ENCODE measurements at regions of chr9 and their contacts with region 1.

Region 1: DNA sequence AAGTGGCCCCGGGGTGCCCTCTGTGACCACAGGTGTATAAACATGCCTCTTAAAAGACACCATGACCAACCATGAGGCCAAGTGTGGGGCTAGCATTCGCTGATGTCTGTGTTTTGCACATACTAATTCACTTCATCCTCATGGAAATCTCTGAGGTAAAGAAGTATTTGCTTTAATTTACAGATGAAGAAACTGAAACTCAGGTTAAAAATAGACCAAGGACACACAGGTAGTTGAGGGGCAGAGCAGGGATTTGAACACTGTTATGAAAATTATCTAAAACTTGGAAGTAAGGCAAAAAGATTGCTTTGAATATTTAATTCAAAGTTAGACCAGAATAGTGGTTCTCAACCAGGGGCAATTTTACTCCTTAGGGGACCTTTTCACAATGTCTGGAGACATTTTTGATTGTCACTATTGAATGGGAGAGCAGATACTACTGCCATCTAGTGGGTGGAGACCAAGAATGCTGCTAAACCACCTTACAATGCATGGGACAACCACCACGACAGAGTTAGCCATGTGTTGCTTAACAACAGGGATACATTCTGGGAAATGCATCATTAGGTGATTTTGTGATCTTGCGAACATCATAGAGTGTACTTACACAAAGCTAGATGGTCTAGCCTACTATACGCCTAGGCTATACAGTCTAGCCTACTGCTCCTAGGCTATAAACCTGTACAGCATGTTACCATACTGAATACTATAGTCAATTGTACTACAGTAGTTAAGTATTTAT is 8.0 kb upstream of the FXN start:
- DNase-seq: peak; percentile 30
- H3K4me3 Mint-ChIP-seq: no peak overlapping the region
- H3K27ac Mint-ChIP-seq: no peak overlapping the region
- H3K4me1 Mint-ChIP-seq: peaks cover 54% of the 10 kb centered on the region
- H3K27me3 Mint-ChIP-seq: no peaks in the 10 kb centered on the region

Region 2: GRCh38 chr9:68704814-68705530 is 322.6 kb before region 1 on chr9 and contains the start of gene PIP5K1B:
- intact Hi-C with region 1: loop called (anchors 10 kb)
- DNase-seq: peak; percentile 69
- H3K4me3 Mint-ChIP-seq: peak within 1 kb of the TSS; percentile 88
- H3K27ac Mint-ChIP-seq: peak within 1 kb of the TSS; percentile 67
- H3K4me1 Mint-ChIP-seq: peaks cover 54% of the 10 kb centered on the region
- H3K27me3 Mint-ChIP-seq: peaks cover 36% of the 10 kb centered on the region
- total RNA-seq, gene PIP5K1B: 76.2 and 77.2 TPM in 2 replicates

Region 3: GRCh38 chr9:68793605-68794343 is 233.8 kb before region 1 on chr9:
- intact Hi-C with region 1: loop called (anchors 5 kb)
- DNase-seq: peak; percentile 33
- H3K4me3 Mint-ChIP-seq: no peak overlapping the region
- H3K27ac Mint-ChIP-seq: no peak overlapping the region
- H3K4me1 Mint-ChIP-seq: peaks cover 25% of the 10 kb centered on the region
- H3K27me3 Mint-ChIP-seq: no peaks in the 10 kb centered on the region

Region 4: GRCh38 chr9:68804911-68805889 is 222.3 kb before region 1 on chr9:
- intact Hi-C with region 1: no loop called
- DNase-seq: no peak
- H3K4me3 Mint-ChIP-seq: no peak overlapping the region
- H3K27ac Mint-ChIP-seq: no peak overlapping the region
- H3K4me1 Mint-ChIP-seq: peaks cover 4% of the 10 kb centered on the region
- H3K27me3 Mint-ChIP-seq: no peaks in the 10 kb centered on the region

Region 5: DNA sequence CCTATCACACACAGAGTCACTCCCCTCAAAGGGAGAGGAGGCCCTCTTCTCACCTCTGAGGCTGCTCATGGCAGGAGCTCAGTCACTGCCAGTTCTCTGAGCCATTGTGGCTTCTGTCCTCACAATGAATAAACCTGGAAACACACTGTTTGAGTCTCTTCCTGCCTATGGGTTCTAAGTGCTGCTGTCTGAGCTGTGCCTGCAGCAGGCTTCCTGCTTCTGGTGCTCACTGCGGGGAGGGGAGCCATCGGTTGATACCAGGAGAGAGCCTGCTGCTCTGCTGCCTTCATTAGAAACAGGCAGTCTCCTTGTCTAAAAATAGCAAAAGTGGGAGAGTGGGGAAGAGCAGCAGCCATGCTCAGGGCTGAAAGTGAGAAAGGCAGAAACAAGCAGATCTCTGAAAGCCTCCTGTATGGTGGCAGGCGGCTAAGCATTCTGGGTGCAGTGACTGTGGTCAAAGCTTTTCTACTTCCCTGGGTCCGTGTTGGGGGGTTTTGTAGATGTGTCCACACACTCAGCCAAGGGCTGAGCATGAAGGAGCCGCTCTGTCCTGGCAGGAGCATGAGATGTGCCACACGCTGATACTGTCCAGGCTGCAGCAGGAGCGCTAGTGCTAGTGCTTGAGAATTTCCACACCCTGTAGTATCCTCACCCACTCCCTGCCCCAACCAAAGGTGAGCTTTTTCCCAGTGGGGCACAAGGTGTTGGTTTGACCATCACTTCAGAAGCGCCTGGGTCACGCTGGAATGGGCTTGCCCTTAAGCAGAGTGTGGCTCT is 47.8 kb before region 1 on chr9:
- intact Hi-C with region 1: loop called (anchors 5 kb)
- DNase-seq: peak; percentile 41
- H3K4me3 Mint-ChIP-seq: peak overlapping the region; percentile 55
- H3K27ac Mint-ChIP-seq: peak overlapping the region; percentile 90
- H3K4me1 Mint-ChIP-seq: peaks cover 76% of the 10 kb centered on the region
- H3K27me3 Mint-ChIP-seq: no peaks in the 10 kb centered on the region

Region 6: GRCh38 chr9:69078581-69078980 is 51.1 kb after region 1 on chr9:
- intact Hi-C with region 1: no loop called
- DNase-seq: no peak
- H3K4me3 Mint-ChIP-seq: no peak overlapping the region
- H3K27ac Mint-ChIP-seq: no peak overlapping the region
- H3K4me1 Mint-ChIP-seq: no peaks in the 10 kb centered on the region
- H3K27me3 Mint-ChIP-seq: no peaks in the 10 kb centered on the region